ENCODE measurements at regions of chr11 and their contacts with region 1.

Region 1: DNA sequence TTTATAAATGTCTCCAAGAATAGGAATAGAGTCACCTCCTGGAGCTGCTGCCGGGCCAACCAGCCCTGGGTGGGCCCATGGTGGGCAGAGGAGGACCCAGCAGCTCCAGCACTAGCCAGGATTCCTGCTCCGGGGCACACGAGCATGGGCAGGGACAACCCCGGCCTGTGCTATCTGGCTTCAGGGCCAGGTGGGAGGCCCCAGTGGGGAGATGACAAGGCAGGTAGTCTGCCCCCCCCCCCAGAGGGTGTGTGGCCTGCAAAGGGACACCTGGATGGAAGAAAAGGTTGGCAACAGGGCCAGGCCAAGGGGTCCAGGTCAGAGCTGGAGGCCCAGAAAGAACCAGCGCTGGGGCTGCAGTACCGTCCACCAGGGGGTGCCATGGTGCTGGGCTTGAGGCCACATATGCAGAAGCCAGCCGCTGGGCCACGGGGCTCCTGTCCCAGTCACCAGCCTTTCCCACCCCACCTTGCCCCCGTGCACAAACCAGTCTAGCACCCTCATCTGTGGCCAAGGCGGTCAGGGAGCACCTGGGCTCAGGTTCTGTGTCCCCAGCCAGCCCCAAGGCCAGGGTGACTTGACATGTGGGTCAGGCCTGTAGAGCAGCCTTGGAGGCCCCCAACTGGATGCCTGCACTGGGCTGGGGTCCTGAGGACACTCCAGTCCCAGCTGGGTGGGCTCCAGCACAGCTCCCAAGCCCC is 3.5 kb downstream of the TSPAN32 start:
- DNase-seq: peak; percentile 70 to 82 (median 81)
- H3K4me3 ChIP-seq: peak overlapping the region in 6 of 7 experiments; percentile 10 to 95 (median 68)
- H3K27ac ChIP-seq: peak overlapping the region in 1 of 2 experiments; percentile 79
- H3K4me1 ChIP-seq: peaks cover 3 to 80% (median 71%) of the 10 kb centered on the region in 4 experiments
- H3K27me3 ChIP-seq: no peaks in the 10 kb centered on the region

Region 2: GRCh38 chr11:2173150-2173693 is 132.1 kb before region 1 on chr11:
- CTCF ChIA-PET with region 1: no interaction called
- POLR2A ChIA-PET with region 1: no interaction called
- DNase-seq: peak; percentile 18 to 44 (median 32)
- H3K4me3 ChIP-seq: no peak overlapping the region
- H3K27ac ChIP-seq: no peak overlapping the region
- H3K4me1 ChIP-seq: no peaks in the 10 kb centered on the region
- H3K27me3 ChIP-seq: peaks cover 0 to 9% (median 0%) of the 10 kb centered on the region in 5 experiments

Region 3: DNA sequence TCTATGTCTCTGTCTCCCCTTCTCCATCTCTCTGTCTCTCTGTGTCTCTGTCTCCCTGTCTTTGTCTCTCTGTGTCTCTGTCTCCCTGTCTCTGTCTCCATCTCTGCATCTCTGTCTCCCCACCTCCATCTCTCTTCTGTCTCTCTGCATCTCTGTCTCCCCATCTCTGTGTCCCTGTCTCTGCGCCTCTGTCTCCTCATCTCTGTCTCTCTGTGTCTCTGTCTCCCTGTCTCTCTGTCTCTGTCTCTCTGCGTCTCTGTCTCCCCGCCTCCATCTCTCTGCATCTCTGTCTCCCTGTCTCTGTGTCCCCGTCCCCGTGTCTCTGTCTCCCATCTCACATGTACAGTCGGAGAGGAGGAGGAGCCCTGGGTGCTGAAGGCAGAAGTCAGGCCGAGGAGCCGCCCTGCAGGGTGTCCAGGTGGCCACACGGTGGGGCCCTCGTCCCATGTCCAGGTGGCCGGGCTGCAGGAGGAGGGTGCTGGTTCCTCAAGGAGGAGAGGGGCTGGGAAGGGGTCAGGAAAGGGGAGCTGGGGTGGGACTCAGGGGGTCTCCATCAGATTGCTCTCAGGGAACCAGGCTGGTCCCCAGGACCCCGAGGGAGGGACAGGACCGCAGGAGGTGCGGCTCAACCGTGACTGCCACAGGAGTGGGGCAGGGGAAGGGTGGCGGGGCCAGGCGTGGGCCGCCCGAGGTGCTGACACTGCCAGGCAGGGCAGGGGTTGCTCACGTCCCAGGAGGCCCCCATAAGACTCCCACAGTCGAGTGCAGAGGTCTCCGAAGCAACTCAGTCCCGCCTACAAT is 108.1 kb before region 1 on chr11:
- CTCF ChIA-PET with region 1: interaction called, 50 read pairs
- POLR2A ChIA-PET with region 1: no interaction called
- DNase-seq: peak; percentile 62 to 76 (median 73)
- H3K4me3 ChIP-seq: no peak overlapping the region
- H3K27ac ChIP-seq: no peak overlapping the region
- H3K4me1 ChIP-seq: peaks cover 0 to 27% (median 14%) of the 10 kb centered on the region in 4 experiments
- H3K27me3 ChIP-seq: peaks cover 0 to 2% (median 0%) of the 10 kb centered on the region in 5 experiments

Region 4: DNA sequence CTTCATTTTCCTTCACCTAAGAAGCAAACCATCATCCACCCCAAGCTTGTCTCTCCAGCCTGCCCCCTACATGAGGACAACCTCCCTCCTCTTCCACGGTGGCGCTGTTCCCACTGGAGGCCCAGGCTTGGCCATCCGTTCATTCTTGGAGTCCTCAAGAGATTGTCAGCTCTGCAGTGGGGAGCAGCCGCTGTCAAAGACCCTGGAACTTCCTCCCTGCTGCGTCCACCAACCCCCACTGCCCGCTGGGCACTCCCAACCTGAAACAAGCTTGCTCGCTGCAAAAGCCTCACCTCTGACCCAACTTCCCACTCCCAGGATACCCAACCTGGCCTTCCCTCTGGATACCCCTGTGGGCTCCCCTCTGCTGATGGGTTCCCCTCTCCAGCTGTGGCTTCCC is 61.4 kb after region 1 on chr11:
- CTCF ChIA-PET with region 1: interaction called, 10 read pairs
- POLR2A ChIA-PET with region 1: no interaction called
- DNase-seq: no peak
- H3K4me3 ChIP-seq: no peak overlapping the region
- H3K27ac ChIP-seq: no peak overlapping the region
- H3K4me1 ChIP-seq: peaks cover 0 to 29% (median 14%) of the 10 kb centered on the region in 4 experiments
- H3K27me3 ChIP-seq: peaks cover 0 to 9% (median 0%) of the 10 kb centered on the region in 5 experiments

Region 5: DNA sequence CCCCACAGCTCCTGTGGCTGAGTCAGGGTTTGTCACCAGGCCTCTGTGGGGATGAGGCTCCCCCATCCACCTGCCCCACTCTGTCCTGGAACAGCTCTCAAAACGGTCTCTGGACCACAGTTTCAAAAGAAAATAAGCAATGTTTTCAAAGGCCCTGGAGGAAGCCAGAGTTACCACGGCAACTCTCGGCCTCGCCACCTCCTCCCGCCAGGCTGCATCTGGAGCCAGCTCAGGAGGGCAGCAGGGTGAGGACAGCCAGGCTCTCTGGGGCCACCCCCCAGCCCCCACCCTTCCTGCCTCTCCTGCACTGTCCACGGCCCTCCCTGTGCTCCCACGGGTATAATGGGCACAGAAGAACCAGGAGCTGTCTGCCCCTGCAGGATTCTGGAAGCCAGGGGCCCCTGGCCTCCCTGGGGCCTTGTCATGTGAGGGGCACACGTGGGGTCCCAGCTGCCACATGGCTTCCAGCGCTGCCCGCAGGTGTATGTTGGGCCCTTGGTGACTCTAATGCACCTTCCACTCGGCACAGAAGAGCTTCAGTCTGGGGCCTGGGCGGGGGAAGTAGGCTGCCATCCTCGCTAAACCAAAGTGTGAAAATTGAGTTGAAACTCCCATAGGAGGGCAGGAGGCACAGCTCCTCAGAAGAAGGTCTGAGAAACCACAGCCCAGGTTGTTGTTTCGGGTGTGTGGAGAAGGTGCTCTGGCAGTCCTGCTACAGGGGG is 82.1 kb after region 1 on chr11:
- CTCF ChIA-PET with region 1: interaction called, 18 read pairs
- POLR2A ChIA-PET with region 1: no interaction called
- DNase-seq: peak in 2 of 3 donors; percentile 60 to 63
- H3K4me3 ChIP-seq: no peak overlapping the region
- H3K27ac ChIP-seq: peak overlapping the region; percentile 27 to 71
- H3K4me1 ChIP-seq: peaks cover 0 to 65% (median 49%) of the 10 kb centered on the region in 4 experiments
- H3K27me3 ChIP-seq: no peaks in the 10 kb centered on the region

Region 6: GRCh38 chr11:2409611-2410468 is 104.5 kb after region 1 on chr11:
- CTCF ChIA-PET with region 1: interaction called, 14 read pairs
- POLR2A ChIA-PET with region 1: no interaction called
- DNase-seq: no peak
- H3K4me3 ChIP-seq: no peak overlapping the region
- H3K27ac ChIP-seq: no peak overlapping the region
- H3K4me1 ChIP-seq: peaks cover 0 to 9% (median 0%) of the 10 kb centered on the region in 4 experiments
- H3K27me3 ChIP-seq: no peaks in the 10 kb centered on the region